Endothelial cell of umbilical vein (primary cell): ENCODE measurements at regions of chr3 and their contacts with region 1.

Region 1: GRCh38 chr3:153429821-153430220 is 267.8 kb downstream of the RAP2B start:
- DNase-seq: peak; percentile 21
- H3K4me3 ChIP-seq: no peak overlapping the region
- H3K27ac ChIP-seq: no peak overlapping the region
- H3K4me1 ChIP-seq: no peaks in the 10 kb centered on the region
- H3K27me3 ChIP-seq: no peaks in the 10 kb centered on the region
- CTCF ChIP-seq: no peak
- POLR2A ChIP-seq: no peak

Region 2: GRCh38 chr3:153443961-153444360 is 14.1 kb after region 1 on chr3:
- CTCF ChIA-PET with region 1: interaction called, 10 read pairs
- POLR2A ChIA-PET with region 1: no interaction called
- dilution Hi-C with region 1: no loop called
- intact Hi-C with region 1: no loop called
- DNase-seq: peak; percentile 18
- H3K4me3 ChIP-seq: no peak overlapping the region
- H3K27ac ChIP-seq: no peak overlapping the region
- H3K4me1 ChIP-seq: no peaks in the 10 kb centered on the region
- H3K27me3 ChIP-seq: no peaks in the 10 kb centered on the region
- CTCF ChIP-seq: peak; percentile 1 to 6
- POLR2A ChIP-seq: no peak

Region 3: GRCh38 chr3:153484842-153485241 is 55.0 kb after region 1 on chr3:
- CTCF ChIA-PET with region 1: no interaction called
- POLR2A ChIA-PET with region 1: no interaction called
- dilution Hi-C with region 1: no loop called
- intact Hi-C with region 1: no loop called
- DNase-seq: no peak
- H3K4me3 ChIP-seq: no peak overlapping the region
- H3K27ac ChIP-seq: no peak overlapping the region
- H3K4me1 ChIP-seq: no peaks in the 10 kb centered on the region
- H3K27me3 ChIP-seq: no peaks in the 10 kb centered on the region
- CTCF ChIP-seq: no peak
- POLR2A ChIP-seq: no peak